ENCODE measurements at regions of chr15 and their contacts with region 1.

Region 1: DNA sequence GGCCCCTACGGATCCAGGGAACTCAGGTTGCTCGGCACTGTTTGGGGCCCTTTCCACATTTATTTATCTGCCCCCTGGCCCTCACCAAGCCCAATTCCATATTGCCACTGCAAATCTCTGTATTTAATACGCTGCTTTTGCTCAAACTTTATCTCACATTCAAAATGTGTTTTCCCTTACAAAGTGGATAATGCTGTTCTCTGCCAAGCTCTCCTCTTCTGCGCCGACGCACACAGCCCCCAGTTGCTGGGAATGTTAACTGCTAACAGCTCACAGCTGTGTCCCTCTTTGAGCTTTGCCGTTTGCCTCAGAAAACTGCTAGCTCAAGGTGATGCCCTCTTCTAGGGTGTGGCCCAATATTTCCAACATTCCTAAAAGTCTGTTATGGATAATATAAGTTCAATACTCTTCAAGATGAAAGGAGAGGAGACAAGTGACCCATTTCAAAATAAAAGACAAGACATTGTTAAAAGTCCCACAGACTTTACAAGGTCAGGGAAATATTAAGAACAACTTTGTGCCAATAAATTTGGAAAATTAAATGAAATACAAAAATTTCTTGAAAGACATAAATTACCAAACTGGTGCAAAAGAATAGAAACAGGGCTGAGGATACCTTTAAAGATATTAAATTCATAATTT is 12.6 kb upstream of the FBN1 start:
- DNase-seq: no peak
- ATAC-seq: no peak
- H3K4me3 ChIP-seq: no peak overlapping the region
- H3K27ac ChIP-seq: no peak overlapping the region
- H3K4me1 ChIP-seq: no peaks in the 10 kb centered on the region
- H3K27me3 ChIP-seq: peaks cover 2% of the 10 kb centered on the region
- CTCF ChIP-seq: no peak

Region 2: GRCh38 chr15:48447657-48448056 is 210.4 kb before region 1 on chr15:
- CTCF ChIA-PET with region 1: no interaction called
- POLR2A ChIA-PET with region 1: no interaction called
- in situ Hi-C with region 1: no loop called
- intact Hi-C with region 1: no loop called
- DNase-seq: no peak
- ATAC-seq: no peak
- H3K4me3 ChIP-seq: no peak overlapping the region
- H3K27ac ChIP-seq: no peak overlapping the region
- H3K4me1 ChIP-seq: no peaks in the 10 kb centered on the region
- H3K27me3 ChIP-seq: no peaks in the 10 kb centered on the region
- CTCF ChIP-seq: no peak

Region 3: DNA sequence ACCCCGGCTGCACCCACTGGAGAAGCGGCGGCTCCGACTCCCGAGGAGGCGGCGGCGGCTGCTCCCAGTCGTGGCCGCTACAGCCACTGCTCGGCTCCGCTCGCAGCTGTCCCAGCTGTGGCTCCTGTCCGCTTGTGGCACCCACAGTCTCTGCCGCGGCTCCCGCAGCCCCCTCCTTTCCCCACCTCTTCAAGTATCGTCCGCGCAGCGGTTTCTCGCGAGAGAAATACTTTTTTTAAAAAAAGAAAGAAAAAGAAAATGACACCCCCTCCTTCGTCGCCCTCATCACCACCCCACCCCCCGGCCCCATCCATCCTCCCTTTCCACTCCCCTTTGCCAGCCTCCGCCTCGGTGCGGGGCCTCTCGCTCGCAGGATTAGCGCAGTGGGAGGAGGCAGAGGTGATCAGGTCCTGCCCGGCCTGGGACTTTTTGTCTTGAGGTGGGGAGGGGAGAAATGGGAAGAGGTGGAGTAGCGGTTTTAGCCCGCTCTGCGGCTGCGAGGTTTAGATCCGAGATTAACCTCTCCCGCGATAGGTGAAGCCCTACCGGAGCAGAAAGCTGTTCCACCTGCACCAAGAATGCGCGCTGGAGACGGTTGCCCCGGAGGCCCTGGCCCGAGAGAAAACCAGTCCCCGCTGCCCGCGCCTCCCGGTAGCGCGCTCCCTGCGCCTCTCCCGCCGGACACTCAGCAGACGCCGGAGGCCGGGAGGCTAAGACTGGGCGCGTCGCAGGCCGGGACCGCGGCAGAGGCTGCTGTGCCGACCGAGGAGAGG is 12.3 kb before region 1 on chr15 and contains the start of gene FBN1:
- CTCF ChIA-PET with region 1: no interaction called
- POLR2A ChIA-PET with region 1: interaction called, 11 read pairs
- in situ Hi-C with region 1: no loop called
- intact Hi-C with region 1: no loop called
- DNase-seq: no peak
- ATAC-seq: peak; percentile 76
- H3K4me3 ChIP-seq: peak within 1 kb of the TSS; percentile 42 to 56
- H3K27ac ChIP-seq: no peak within 1 kb of the TSS
- H3K4me1 ChIP-seq: no peaks in the 10 kb centered on the region; the same call in 1 of the 2 replicates
- H3K27me3 ChIP-seq: peaks cover 12% of the 10 kb centered on the region
- CTCF ChIP-seq: no peak
- total RNA-seq, gene FBN1: 0.46 TPM